ENCODE measurements at regions of chrX and their contacts with region 1.

Region 1: GRCh38 chrX:48475774-48476577 is at the start of gene FTSJ1:
- DNase-seq: peak; percentile 75 to 96 (median 87)
- ATAC-seq: peak; percentile 89
- H3K4me3 ChIP-seq: peak within 1 kb of the TSS; percentile 62 to 86
- H3K4me3 Mint-ChIP-seq: peak within 1 kb of the TSS; percentile 88
- H3K27ac ChIP-seq: peak within 1 kb of the TSS; percentile 85 to 88
- H3K27ac Mint-ChIP-seq: peak within 1 kb of the TSS; percentile 90
- H3K4me1 ChIP-seq: peaks cover 14% of the 10 kb centered on the region
- H3K4me1 Mint-ChIP-seq: peaks cover 30% of the 10 kb centered on the region
- H3K27me3 ChIP-seq: no peaks in the 10 kb centered on the region
- H3K27me3 Mint-ChIP-seq: no peaks in the 10 kb centered on the region
- CTCF ChIP-seq: no peak
- total RNA-seq, gene FTSJ1: 61.4 to 67.4 TPM

Region 2: GRCh38 chrX:48083212-48083611 is 392.8 kb before region 1 on chrX:
- CTCF ChIA-PET with region 1: no interaction called
- POLR2A ChIA-PET with region 1: no interaction called
- intact Hi-C with region 1: no loop called
- DNase-seq: peak; percentile 5 to 63 (median 39)
- ATAC-seq: peak; percentile 74
- H3K4me3 ChIP-seq: no peak overlapping the region
- H3K4me3 Mint-ChIP-seq: no peak overlapping the region
- H3K27ac ChIP-seq: no peak overlapping the region
- H3K27ac Mint-ChIP-seq: no peak overlapping the region
- H3K4me1 ChIP-seq: no peaks in the 10 kb centered on the region
- H3K4me1 Mint-ChIP-seq: no peaks in the 10 kb centered on the region
- H3K27me3 ChIP-seq: no peaks in the 10 kb centered on the region
- H3K27me3 Mint-ChIP-seq: no peaks in the 10 kb centered on the region
- CTCF ChIP-seq: peak; percentile 56

Region 3: GRCh38 chrX:48508400-48509244 is 32.6 kb after region 1 on chrX and contains the start of gene PORCN:
- CTCF ChIA-PET with region 1: no interaction called
- POLR2A ChIA-PET with region 1: interaction called, 5 read pairs
- intact Hi-C with region 1: loop called (anchors 1 kb)
- DNase-seq: peak; percentile 56 to 85 (median 81)
- ATAC-seq: peak; percentile 93
- H3K4me3 ChIP-seq: peak within 1 kb of the TSS; percentile 76 to 79
- H3K4me3 Mint-ChIP-seq: peak within 1 kb of the TSS; percentile 90
- H3K27ac ChIP-seq: peak within 1 kb of the TSS; percentile 76 to 78
- H3K27ac Mint-ChIP-seq: peak within 1 kb of the TSS; percentile 94
- H3K4me1 ChIP-seq: peaks cover 6% of the 10 kb centered on the region
- H3K4me1 Mint-ChIP-seq: peaks cover 25% of the 10 kb centered on the region
- H3K27me3 ChIP-seq: no peaks in the 10 kb centered on the region
- H3K27me3 Mint-ChIP-seq: no peaks in the 10 kb centered on the region
- CTCF ChIP-seq: no peak
- total RNA-seq, gene PORCN: 18.3 to 19.8 TPM

Region 4: DNA sequence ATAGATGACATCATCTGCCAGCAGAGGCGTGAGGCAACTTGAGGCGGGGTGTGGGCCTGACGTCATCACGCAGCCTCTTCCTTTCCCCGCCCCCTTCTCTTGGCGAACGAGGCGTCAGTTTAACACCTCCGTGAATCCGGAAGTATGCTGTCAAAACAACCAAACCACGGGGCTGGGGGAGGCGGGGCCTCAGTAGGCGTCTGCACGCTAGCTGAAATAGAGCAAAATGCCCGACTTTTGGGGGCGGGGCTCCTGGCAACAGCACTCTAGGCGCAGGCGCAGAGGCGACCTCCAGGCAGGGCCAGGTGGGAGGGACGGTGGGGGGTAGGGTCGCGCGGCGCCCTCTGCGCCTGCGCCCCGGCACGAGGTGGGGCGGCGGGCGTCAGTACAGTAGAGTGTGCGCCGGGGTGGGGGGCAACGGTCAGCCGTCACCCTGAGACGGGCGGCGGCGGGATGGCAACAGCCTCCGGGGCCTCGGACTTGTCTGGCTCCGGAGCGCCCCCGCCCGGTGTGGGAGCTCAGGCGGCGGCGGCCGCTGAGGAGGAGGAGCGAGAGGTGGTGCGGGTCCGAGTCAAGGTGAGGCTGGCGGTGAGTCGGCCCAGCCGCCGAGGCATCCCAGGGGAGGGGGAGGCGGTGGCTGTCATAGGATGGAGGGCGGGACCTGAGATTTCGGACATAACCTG is 63.5 kb after region 1 on chrX and contains the start of gene TBC1D25:
- CTCF ChIA-PET with region 1: no interaction called
- POLR2A ChIA-PET with region 1: interaction called, 4 read pairs
- intact Hi-C with region 1: loop called (anchors 1 kb)
- DNase-seq: peak; percentile 90 to 99 (median 96)
- ATAC-seq: peak; percentile 83
- H3K4me3 ChIP-seq: peak within 1 kb of the TSS; percentile 75 to 80
- H3K4me3 Mint-ChIP-seq: peak within 1 kb of the TSS; percentile 90
- H3K27ac ChIP-seq: peak within 1 kb of the TSS; percentile 91 to 99
- H3K27ac Mint-ChIP-seq: peak within 1 kb of the TSS; percentile 97
- H3K4me1 ChIP-seq: peaks cover 15% of the 10 kb centered on the region
- H3K4me1 Mint-ChIP-seq: peaks cover 24% of the 10 kb centered on the region
- H3K27me3 ChIP-seq: no peaks in the 10 kb centered on the region
- H3K27me3 Mint-ChIP-seq: no peaks in the 10 kb centered on the region
- CTCF ChIP-seq: no peak
- total RNA-seq, gene TBC1D25: 30.1 to 33.4 TPM

Region 5: GRCh38 chrX:48597353-48598264 is 121.6 kb after region 1 on chrX and contains the start of gene WDR13:
- CTCF ChIA-PET with region 1: no interaction called
- POLR2A ChIA-PET with region 1: no interaction called
- intact Hi-C with region 1: loop called in 1 of 2 experiments (anchors 5 kb)
- DNase-seq: peak; percentile 79 to 94 (median 90)
- ATAC-seq: peak; percentile 82
- H3K4me3 ChIP-seq: peak within 1 kb of the TSS; percentile 90 to 99
- H3K4me3 Mint-ChIP-seq: peak within 1 kb of the TSS; percentile 94
- H3K27ac ChIP-seq: peak within 1 kb of the TSS; percentile 100
- H3K27ac Mint-ChIP-seq: peak within 1 kb of the TSS; percentile 100
- H3K4me1 ChIP-seq: peaks cover 7% of the 10 kb centered on the region
- H3K4me1 Mint-ChIP-seq: peaks cover 10% of the 10 kb centered on the region
- H3K27me3 ChIP-seq: no peaks in the 10 kb centered on the region
- H3K27me3 Mint-ChIP-seq: no peaks in the 10 kb centered on the region
- CTCF ChIP-seq: no peak
- total RNA-seq, gene WDR13: 41.6 to 51.6 TPM